Activated B cell treated with CpG ODN at 0.5 μM for 24 hours (primary cell): ENCODE measurements at regions of chr3 and their contacts with region 1.

Region 1: GRCh38 chr3:117019082-117019713 is 309.6 kb downstream of the TUSC7 start:
- DNase-seq: no peak
- ATAC-seq: peak; percentile 57
- H3K4me3 Mint-ChIP-seq: no peak overlapping the region
- H3K27ac Mint-ChIP-seq: no peak overlapping the region
- H3K4me1 Mint-ChIP-seq: peaks cover 5% of the 10 kb centered on the region
- H3K27me3 Mint-ChIP-seq: peaks cover 5% of the 10 kb centered on the region
- CTCF ChIP-seq: no peak

Region 2: GRCh38 chr3:116591236-116591635 is 428.0 kb before region 1 on chr3:
- CTCF ChIA-PET with region 1: no interaction called
- POLR2A ChIA-PET with region 1: no interaction called
- intact Hi-C with region 1: no loop called
- DNase-seq: no peak
- ATAC-seq: no peak
- H3K4me3 Mint-ChIP-seq: no peak overlapping the region
- H3K27ac Mint-ChIP-seq: no peak overlapping the region
- H3K4me1 Mint-ChIP-seq: no peaks in the 10 kb centered on the region
- H3K27me3 Mint-ChIP-seq: no peaks in the 10 kb centered on the region
- CTCF ChIP-seq: no peak

Region 3: DNA sequence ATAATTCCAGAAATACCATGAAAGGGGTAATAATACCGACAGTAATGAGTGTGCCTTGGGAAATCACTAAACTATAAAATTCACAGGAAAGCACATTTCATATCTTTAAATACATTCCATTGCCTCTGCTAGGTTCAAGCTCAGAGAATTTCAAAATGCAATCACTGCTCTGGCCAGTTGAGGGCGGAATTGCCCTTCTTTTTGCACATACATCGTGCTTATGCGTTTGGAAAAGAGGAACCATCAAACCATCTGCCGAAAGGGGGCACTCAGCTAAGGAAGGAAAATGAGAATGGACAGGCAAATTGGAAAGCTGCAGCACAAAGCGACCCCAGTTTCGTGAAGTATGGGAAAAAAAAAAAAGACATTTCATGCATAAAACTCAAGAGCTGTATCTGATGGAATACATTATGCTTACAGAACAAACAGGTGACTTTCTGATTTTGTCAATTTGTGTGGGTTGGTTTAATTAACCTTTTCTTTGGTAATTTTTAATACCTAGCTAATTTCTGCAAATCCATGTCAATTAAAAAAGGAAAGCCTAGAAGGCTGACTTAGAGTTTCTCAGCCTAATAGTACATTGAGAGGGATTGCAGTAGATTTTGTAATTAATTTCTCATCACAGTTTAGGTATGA is 248.3 kb before region 1 on chr3:
- CTCF ChIA-PET with region 1: interaction called, 4 read pairs
- POLR2A ChIA-PET with region 1: no interaction called
- intact Hi-C with region 1: loop called (anchors 2 kb)
- DNase-seq: peak; percentile 16
- ATAC-seq: peak; percentile 82
- H3K4me3 Mint-ChIP-seq: no peak overlapping the region
- H3K27ac Mint-ChIP-seq: no peak overlapping the region
- H3K4me1 Mint-ChIP-seq: no peaks in the 10 kb centered on the region
- H3K27me3 Mint-ChIP-seq: no peaks in the 10 kb centered on the region
- CTCF ChIP-seq: peak; percentile 92

Region 4: DNA sequence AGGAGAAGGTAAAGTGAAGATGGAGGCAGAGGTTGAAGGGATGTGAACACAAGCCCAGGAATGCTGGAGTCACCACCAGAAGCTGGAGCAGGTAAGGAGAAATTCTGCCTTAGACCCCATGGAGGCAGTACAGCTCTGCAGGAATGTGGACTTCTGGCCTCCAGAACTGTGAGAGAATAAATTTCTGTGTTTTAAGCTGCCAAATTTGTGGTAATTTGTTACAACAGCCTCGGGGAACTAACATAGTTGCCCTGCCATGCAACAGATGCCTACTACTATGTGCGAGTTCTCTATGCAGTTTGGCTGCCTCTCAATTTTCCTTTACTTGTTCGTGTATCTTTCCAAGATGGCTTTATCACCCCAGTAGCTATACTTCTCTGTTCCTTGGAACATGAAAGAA is 84.5 kb after region 1 on chr3:
- CTCF ChIA-PET with region 1: no interaction called
- POLR2A ChIA-PET with region 1: no interaction called
- intact Hi-C with region 1: no loop called
- DNase-seq: no peak
- ATAC-seq: no peak
- H3K4me3 Mint-ChIP-seq: no peak overlapping the region
- H3K27ac Mint-ChIP-seq: no peak overlapping the region
- H3K4me1 Mint-ChIP-seq: no peaks in the 10 kb centered on the region
- H3K27me3 Mint-ChIP-seq: no peaks in the 10 kb centered on the region
- CTCF ChIP-seq: no peak

Region 5: DNA sequence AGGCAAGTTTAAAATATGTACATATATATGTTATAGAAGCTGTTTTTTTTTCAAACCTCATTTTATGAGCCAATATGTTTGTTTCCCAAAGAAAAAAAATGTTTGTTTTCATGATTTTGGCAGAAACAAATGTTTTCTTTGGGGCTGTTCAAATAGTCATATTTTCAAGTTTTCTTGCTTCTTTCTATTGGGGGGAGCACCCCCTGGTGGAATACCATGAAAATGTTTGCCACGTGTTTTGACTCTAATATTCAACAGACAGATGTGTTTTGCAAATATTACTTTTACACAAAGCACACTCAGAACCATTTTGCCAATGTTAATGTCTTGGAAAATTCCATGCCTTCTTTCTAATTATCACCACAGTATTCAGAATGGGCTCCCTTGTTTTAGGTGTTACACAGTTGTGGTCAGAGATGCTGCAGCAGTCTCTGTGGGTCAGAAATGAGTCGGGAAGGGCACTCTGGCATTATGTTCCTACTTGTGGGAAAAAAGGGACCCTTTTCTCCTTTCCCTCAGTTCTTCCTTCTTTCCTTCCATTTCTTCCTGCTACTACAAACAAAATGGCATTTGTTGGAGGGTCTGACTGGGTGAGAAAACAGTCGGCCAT is 507.4 kb after region 1 on chr3:
- CTCF ChIA-PET with region 1: interaction called, 11 read pairs
- POLR2A ChIA-PET with region 1: no interaction called
- intact Hi-C with region 1: loop called (anchors 1 kb)
- DNase-seq: no peak
- ATAC-seq: no peak
- H3K4me3 Mint-ChIP-seq: no peak overlapping the region
- H3K27ac Mint-ChIP-seq: no peak overlapping the region
- H3K4me1 Mint-ChIP-seq: no peaks in the 10 kb centered on the region
- H3K27me3 Mint-ChIP-seq: no peaks in the 10 kb centered on the region
- CTCF ChIP-seq: no peak

Region 6: GRCh38 chr3:118817748-118818165 is 1798.6 kb after region 1 on chr3:
- CTCF ChIA-PET with region 1: interaction called, 3 read pairs
- POLR2A ChIA-PET with region 1: no interaction called
- intact Hi-C with region 1: loop called (anchors 1 kb)
- DNase-seq: no peak
- ATAC-seq: peak; percentile 42
- H3K4me3 Mint-ChIP-seq: no peak overlapping the region
- H3K27ac Mint-ChIP-seq: no peak overlapping the region
- H3K4me1 Mint-ChIP-seq: no peaks in the 10 kb centered on the region
- H3K27me3 Mint-ChIP-seq: peaks cover 2% of the 10 kb centered on the region
- CTCF ChIP-seq: peak; percentile 61